ENCODE measurements at regions of chr14 and their contacts with region 1.

Region 1: GRCh38 chr14:105300792-105301533 is at the start of gene BRF1:
- DNase-seq: peak; percentile 100
- ATAC-seq: peak; percentile 86
- H3K4me3 Mint-ChIP-seq: peak within 1 kb of the TSS; percentile 89
- H3K27ac Mint-ChIP-seq: peak within 1 kb of the TSS; percentile 89
- H3K4me1 Mint-ChIP-seq: peaks cover 13% of the 10 kb centered on the region
- H3K27me3 Mint-ChIP-seq: no peaks in the 10 kb centered on the region
- CTCF ChIP-seq: no peak
- total RNA-seq, gene BRF1: 28.7 and 32.8 TPM in 2 replicates

Region 2: DNA sequence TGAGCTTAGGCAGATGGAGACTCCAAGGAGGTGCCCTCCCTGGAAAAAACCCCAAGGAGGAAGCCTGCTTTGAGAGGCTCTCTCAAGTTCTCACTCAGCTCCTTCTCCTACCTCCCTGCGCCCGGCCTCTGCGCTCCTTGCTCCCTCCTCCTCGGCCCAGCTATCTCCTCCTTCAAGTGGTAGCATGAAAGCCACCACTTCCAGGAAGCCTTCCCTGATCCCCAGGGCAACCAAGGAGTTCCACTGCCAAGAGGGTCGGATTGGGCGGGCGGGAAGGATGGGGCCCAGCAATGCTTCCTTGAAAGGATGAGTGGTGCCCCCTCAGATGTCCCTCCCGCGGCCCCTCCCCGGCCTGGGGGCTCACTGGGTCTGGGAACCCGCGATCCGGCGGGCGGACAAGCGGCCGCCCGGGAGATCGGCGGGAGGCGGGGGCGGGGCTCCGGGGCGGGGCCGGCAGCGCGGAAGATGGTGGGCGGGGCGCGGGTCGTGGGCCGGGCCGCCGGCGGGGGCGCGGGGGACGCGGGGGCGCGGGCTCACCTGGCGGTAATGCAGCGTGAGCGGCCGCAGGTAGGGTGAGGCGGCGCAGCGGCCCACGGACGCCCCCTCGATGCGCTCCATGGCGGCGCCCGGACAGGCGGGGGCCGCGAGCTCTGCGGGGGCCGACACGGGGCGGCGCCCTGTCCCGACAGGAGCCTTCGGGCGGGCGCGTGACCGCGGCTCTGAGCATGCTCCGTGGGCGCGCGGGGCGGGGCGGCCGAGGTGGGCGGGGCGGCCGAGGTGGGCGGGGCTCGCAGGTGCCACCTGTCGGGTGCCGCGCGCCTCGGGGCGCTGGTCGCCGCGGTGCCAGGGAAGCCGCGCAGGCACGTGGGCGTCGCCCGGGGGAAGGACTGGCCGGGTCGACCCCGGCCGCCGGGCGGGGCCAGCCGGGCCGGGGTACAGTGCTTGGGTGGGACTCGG is 120.1 kb before region 1 on chr14 and contains the start of gene NUDT14:
- CTCF ChIA-PET with region 1: no interaction called
- POLR2A ChIA-PET with region 1: no interaction called
- intact Hi-C with region 1: loop called (anchors 5 kb)
- DNase-seq: peak; percentile 86
- ATAC-seq: peak; percentile 95
- H3K4me3 Mint-ChIP-seq: peak within 1 kb of the TSS; percentile 76
- H3K27ac Mint-ChIP-seq: no peak within 1 kb of the TSS
- H3K4me1 Mint-ChIP-seq: peaks cover 9% of the 10 kb centered on the region
- H3K27me3 Mint-ChIP-seq: peaks cover 5% of the 10 kb centered on the region
- CTCF ChIP-seq: no peak
- total RNA-seq, gene NUDT14: 15.1 and 15.2 TPM in 2 replicates

Region 3: GRCh38 chr14:105314287-105315200 is 13.6 kb after region 1 on chr14 and contains the start of gene PACS2:
- CTCF ChIA-PET with region 1: interaction called, 5 read pairs
- POLR2A ChIA-PET with region 1: interaction called, 57 read pairs
- intact Hi-C with region 1: loop called (anchors 1 kb)
- DNase-seq: peak; percentile 86
- ATAC-seq: peak; percentile 86
- H3K4me3 Mint-ChIP-seq: peak within 1 kb of the TSS; percentile 86
- H3K27ac Mint-ChIP-seq: peak within 1 kb of the TSS; percentile 46
- H3K4me1 Mint-ChIP-seq: peaks cover 10% of the 10 kb centered on the region
- H3K27me3 Mint-ChIP-seq: no peaks in the 10 kb centered on the region
- CTCF ChIP-seq: no peak
- total RNA-seq, gene PACS2: 37.4 and 48.0 TPM in 2 replicates

Region 4: GRCh38 chr14:105337966-105338741 is 37.2 kb after region 1 on chr14:
- CTCF ChIA-PET with region 1: no interaction called
- POLR2A ChIA-PET with region 1: no interaction called
- intact Hi-C with region 1: no loop called
- DNase-seq: no peak
- ATAC-seq: no peak
- H3K4me3 Mint-ChIP-seq: no peak overlapping the region
- H3K27ac Mint-ChIP-seq: no peak overlapping the region
- H3K4me1 Mint-ChIP-seq: peaks cover 2% of the 10 kb centered on the region
- H3K27me3 Mint-ChIP-seq: no peaks in the 10 kb centered on the region
- CTCF ChIP-seq: no peak

Region 5: DNA sequence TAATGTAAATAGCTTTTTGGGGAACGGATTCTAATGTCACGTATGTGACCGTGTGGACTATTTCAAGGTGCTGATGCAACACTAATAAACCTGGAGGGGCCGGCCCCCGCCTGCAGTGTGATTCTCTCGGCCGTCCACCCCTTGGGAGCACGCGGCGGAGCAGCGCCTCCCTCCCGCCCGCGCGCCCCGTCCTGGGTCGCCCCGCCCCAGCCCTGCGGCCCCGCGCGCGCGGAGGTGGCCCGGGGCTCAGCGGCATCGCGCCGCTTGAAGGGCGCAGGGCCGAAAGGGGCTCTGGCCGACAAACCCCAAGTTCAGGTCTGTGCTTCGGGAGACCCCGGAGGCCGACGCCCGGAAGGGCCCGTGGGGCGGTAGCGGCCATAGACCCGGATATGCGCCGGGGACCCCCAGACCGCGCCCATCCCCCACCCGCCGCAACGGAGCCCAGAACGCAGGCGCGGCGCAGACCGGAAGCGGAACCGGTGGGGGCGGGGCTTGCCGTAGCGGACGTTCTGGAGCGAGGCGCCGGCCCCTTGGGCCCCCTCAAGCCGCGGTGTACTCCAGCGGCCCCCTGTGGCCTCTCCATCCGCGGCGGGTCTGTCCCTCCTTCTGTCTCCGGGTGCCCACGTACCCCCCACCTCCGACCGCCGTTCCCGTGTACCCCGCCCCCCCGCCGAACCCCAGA is 97.2 kb after region 1 on chr14 and contains the start of gene TEX22:
- CTCF ChIA-PET with region 1: no interaction called
- POLR2A ChIA-PET with region 1: interaction called, 11 read pairs
- intact Hi-C with region 1: loop called (anchors 1 kb)
- DNase-seq: peak; percentile 99
- ATAC-seq: peak; percentile 86
- H3K4me3 Mint-ChIP-seq: peak within 1 kb of the TSS; percentile 90
- H3K27ac Mint-ChIP-seq: peak within 1 kb of the TSS; percentile 91
- H3K4me1 Mint-ChIP-seq: peaks cover 24% of the 10 kb centered on the region
- H3K27me3 Mint-ChIP-seq: no peaks in the 10 kb centered on the region
- CTCF ChIP-seq: no peak
- total RNA-seq, gene TEX22: 2.8 and 5.7 TPM in 2 replicates

Measured in activated B cell treated with CpG ODN at 0.5 μM for 24 hours (primary cell).